ENCODE measurements at regions of chr10 and their contacts with region 1.

Region 1: DNA sequence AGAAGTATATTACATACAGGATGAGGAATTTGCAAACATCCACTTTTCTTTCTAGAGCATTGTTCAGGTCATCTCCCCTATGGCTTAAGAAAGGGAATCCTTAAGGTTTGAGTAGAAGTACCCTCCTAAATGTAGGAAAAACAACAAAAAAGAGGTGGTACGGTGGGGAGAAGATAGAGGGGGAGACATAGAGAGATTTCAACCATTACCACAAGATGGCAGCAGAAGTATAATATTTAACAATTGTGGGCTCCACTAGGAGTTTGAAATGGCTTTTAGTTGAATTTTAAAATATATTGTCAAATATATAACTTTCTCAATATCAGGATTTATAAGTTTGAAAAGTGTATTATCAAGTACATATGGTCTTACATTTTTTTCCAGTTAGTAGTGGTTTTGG is 72.7 kb upstream of the PRKG1 start:
- DNase-seq: no peak
- H3K4me3 Mint-ChIP-seq: no peak overlapping the region
- H3K27ac Mint-ChIP-seq: no peak overlapping the region
- H3K4me1 Mint-ChIP-seq: no peaks in the 10 kb centered on the region
- H3K27me3 Mint-ChIP-seq: peaks cover 4% of the 10 kb centered on the region

Region 2: DNA sequence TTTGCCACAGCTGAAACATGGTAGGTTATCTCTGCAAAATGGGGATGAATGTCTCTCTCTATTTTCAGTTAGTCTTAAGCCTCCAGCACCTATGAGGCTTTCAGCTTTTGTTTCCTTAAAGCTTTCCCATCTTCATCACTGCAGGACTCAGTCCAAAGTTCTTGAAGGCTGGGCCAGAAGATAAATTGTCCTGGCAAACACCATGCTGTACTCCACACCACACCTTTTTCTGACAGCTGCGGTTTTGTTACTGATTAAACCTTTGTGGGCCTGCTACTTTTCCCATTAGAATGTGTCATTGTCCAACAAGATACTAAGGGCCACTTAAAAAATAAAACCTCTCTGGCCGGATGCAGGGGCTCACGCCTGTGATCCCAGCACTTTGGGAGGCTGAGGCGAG is 29.0 kb before region 1 on chr10:
- CTCF ChIA-PET with region 1: no interaction called
- intact Hi-C with region 1: no loop called
- DNase-seq: no peak
- H3K4me3 Mint-ChIP-seq: no peak overlapping the region
- H3K27ac Mint-ChIP-seq: no peak overlapping the region
- H3K4me1 Mint-ChIP-seq: no peaks in the 10 kb centered on the region
- H3K27me3 Mint-ChIP-seq: no peaks in the 10 kb centered on the region

Region 3: DNA sequence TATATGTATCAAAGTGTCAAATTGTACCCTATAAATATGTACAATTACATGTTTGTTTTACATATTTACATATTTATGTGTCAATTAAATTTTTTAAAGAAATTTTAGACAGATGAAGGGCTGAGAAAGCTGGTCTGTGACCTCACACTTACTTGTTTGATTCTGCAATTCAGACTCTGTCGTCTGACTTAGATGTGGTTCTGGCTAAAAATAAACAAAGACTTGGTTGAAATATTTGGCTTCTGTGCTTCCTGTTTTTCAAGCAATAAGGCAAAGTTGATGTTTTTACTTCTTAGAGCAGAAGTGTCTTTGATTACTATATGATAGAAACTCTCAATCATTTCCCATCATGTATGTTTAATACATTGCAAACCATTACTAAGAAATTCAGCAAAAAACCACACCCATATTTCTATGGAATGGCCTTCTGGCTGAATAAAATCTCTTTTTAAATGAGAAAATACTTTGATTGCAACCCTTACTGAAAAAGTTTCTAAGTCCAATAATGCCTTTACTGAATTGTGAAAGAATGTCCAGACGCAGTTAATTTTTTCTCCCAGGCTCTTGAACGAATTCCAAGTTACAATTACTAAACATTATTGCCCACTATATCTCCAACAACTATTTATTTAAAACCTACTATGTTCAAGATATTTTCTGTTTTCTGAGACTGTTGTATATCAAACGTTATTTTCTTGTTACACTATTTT is 13.2 kb after region 1 on chr10:
- CTCF ChIA-PET with region 1: no interaction called
- intact Hi-C with region 1: no loop called
- DNase-seq: no peak
- H3K4me3 Mint-ChIP-seq: no peak overlapping the region
- H3K27ac Mint-ChIP-seq: no peak overlapping the region
- H3K4me1 Mint-ChIP-seq: no peaks in the 10 kb centered on the region
- H3K27me3 Mint-ChIP-seq: peaks cover 9% of the 10 kb centered on the region

Region 4: GRCh38 chr10:51074238-51075028 is 72.8 kb after region 1 on chr10 and contains the start of gene PRKG1:
- CTCF ChIA-PET with region 1: no interaction called
- intact Hi-C with region 1: loop called (anchors 10 kb)
- DNase-seq: peak; percentile 5
- H3K4me3 Mint-ChIP-seq: peak within 1 kb of the TSS; percentile 73
- H3K27ac Mint-ChIP-seq: no peak within 1 kb of the TSS
- H3K4me1 Mint-ChIP-seq: peaks cover 15% of the 10 kb centered on the region
- H3K27me3 Mint-ChIP-seq: peaks cover 37% of the 10 kb centered on the region
- total RNA-seq, gene PRKG1: not detected

Region 5: DNA sequence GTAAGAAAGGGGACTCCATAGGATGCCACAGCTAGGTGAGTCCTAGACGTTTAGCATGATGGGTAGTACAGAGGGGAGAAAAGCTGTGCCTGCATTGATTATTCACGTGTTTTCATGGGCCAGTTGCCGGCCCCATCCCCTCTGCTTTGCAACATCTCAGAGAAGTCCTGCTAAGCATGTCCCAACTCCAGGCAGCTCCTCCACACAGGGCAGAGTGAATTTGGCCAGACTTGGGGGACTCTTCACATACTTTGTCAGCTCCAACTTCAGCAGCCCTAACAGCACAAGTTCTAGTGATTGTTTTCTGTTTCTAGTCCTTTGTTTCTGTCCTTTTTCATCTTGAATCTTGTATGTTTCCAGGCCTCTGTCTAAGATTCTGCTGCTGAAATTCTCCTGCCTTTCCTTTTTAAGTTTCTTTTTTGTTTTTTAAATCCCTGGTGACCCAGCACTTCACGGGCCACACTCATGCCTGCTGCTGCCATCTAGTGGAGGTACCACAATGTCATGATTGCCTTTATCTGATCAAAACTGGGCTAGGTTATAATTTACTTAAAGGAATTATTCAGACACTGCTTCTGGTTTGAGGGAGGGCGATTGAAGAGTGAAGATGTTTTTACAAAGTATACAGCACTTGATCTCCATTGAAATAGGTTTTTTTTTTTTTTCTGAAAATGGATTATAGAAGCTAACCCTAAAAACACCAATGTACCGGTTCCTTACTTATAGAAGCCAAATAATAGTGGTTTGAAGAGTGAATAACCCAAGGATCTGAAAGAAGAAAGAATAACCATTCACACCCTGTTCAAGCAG is 420.9 kb after region 1 on chr10:
- CTCF ChIA-PET with region 1: no interaction called
- intact Hi-C with region 1: loop called (anchors 2 kb)
- DNase-seq: peak; percentile 52
- H3K4me3 Mint-ChIP-seq: no peak overlapping the region
- H3K27ac Mint-ChIP-seq: no peak overlapping the region
- H3K4me1 Mint-ChIP-seq: no peaks in the 10 kb centered on the region
- H3K27me3 Mint-ChIP-seq: peaks cover 11% of the 10 kb centered on the region

Measured in activated naive CD4-positive, alpha-beta T cell treated with anti-CD3 and anti-CD28 coated beads for 36 hours (primary cell).